PC-9 (cell line): ENCODE measurements at regions of chr4 and their contacts with region 1.

Region 1: DNA sequence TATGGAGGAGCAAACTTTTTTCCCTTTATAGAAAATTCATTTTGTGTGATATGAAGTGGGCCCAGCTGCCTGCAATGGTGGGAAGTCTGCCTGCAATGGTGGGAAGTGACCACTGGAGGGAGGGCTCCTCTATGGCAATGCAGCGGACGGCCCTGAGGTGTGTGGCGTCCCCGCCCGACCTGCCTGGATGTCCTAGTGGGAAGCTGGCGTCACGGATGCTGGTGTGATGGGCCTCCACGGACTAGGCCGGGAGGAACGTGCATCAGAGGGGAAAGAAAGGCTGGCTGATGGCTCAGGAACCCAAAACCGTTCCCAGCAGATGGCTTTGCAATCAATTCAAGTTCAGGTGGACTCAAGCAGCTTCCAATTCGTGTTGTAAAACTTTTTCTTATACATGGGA is 177.9 kb downstream of the AFAP1 start:
- DNase-seq: peak in 1 of 2 experiments; percentile 46
- H3K4me3 ChIP-seq: no peak overlapping the region
- H3K27ac ChIP-seq: no peak overlapping the region
- H3K4me1 ChIP-seq: peaks cover 13% of the 10 kb centered on the region; the same call in 1 of the 2 replicates
- H3K27me3 ChIP-seq: no peaks in the 10 kb centered on the region
- CTCF ChIP-seq: peak; percentile 63

Region 2: DNA sequence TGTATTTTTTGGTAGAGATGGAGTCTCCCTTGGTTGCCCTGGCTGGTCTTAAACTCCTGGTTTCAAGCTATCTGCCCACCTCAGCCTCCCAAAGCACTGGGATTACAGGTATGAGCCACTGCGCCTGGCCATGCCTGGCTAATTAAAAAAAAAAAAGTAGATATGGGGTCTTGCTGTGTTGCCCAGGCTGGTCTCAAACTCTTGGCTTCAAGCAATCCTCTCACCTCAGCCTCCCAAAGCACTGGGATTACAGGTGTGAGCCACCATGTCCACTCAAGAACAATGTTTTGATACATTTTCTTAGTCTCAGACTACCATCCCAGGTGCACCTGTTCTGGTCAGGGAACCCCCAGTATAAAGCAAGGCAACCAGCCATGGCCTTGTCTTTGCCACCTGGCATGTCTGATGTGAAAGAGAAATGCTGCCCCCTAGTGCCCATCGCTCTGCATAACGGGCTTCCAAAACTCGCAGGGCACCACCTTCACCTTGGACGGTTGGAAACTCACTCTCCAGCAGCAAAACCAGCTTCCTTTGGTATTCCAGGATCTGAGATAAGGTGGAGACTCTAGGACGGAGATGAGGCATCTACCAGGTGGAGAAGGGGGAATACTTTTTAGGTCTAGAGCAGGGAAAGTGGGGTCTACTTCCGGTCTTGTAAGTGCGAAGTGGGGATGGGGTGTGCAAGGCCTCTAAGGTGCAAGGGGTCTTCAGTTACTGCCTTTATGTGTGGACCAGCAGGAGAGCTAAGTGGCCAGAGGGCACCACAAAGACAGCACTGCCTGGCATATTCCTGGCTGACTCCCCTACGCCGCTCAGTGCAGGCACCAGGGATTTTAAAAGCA is 225.6 kb after region 1 on chr4:
- CTCF ChIA-PET with region 1: no interaction called
- POLR2A ChIA-PET with region 1: no interaction called
- intact Hi-C with region 1: loop called (anchors 5 kb)
- DNase-seq: peak; percentile 58 to 77
- H3K4me3 ChIP-seq: no peak overlapping the region
- H3K27ac ChIP-seq: peak overlapping the region; percentile 49
- H3K4me1 ChIP-seq: peaks cover 13% of the 10 kb centered on the region
- H3K27me3 ChIP-seq: no peaks in the 10 kb centered on the region
- CTCF ChIP-seq: peak; percentile 90